ENCODE measurements at regions of chr15 and their contacts with region 1.

Region 1: GRCh38 chr15:95291898-95292472 is 1038.5 kb upstream of the NR2F2 start:
- DNase-seq: peak in 3 of 9 donors; percentile 6 to 15 (median 13)
- ATAC-seq: no peak
- H3K4me3 ChIP-seq: no peak overlapping the region
- H3K4me3 Mint-ChIP-seq: no peak overlapping the region
- H3K27ac ChIP-seq: no peak overlapping the region
- H3K27ac Mint-ChIP-seq: no peak overlapping the region
- H3K4me1 ChIP-seq: no peaks in the 10 kb centered on the region
- H3K4me1 Mint-ChIP-seq: peaks cover 0 to 34% (median 0%) of the 10 kb centered on the region in 7 donors
- H3K27me3 ChIP-seq: no peaks in the 10 kb centered on the region
- H3K27me3 Mint-ChIP-seq: peaks cover 51 to 77% (median 64%) of the 10 kb centered on the region in 5 donors

Region 2: DNA sequence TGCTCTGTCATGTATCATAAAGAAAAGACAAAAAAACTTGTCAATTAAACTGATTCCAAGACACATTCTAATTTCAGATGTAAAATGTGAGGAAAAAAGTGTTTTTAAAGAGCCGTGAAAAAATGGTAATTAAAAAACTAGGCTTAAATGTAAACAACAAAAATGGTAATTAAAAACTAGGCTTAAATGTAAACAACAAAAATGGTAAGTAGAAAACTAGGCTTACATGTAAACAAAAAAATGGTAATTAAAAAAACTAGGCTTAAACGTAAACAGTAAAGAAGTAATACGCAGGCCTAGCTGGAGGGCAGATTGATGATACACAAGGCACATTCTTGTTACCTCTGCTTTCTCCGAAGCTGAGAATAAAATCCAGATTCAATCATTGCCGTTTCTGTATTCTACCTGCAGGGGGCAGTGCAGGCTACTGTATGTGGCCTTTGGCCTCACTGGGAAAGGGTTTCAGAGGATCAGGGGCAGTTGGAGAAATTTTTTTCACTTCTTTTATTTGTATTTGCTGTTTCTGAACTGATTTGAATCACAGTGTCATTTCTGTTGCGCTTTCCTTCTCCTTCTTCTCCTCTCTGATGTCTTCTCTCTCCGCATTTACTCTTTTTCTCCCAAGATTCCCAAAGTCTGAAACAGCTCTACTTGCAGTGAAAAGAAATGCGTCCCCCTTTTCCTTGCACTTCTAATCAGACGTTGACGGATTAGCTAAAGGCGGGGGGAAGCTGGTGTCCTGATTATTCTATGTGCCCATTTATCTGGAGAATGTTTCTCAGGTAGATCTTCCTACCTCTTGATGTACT is 1127.8 kb before region 1 on chr15:
- CTCF ChIA-PET with region 1: no interaction called
- POLR2A ChIA-PET with region 1: no interaction called
- intact Hi-C with region 1: loop called in 1 of 2 experiments (anchors 5 kb)
- DNase-seq: peak in 8 of 9 donors; percentile 18 to 53 (median 35)
- ATAC-seq: peak; percentile 77
- H3K4me3 ChIP-seq: no peak overlapping the region
- H3K4me3 Mint-ChIP-seq: no peak overlapping the region
- H3K27ac ChIP-seq: no peak overlapping the region
- H3K27ac Mint-ChIP-seq: no peak overlapping the region
- H3K4me1 ChIP-seq: no peaks in the 10 kb centered on the region
- H3K4me1 Mint-ChIP-seq: peaks cover 0 to 9% (median 0%) of the 10 kb centered on the region in 7 donors
- H3K27me3 ChIP-seq: no peaks in the 10 kb centered on the region
- H3K27me3 Mint-ChIP-seq: peaks cover 0 to 30% (median 4%) of the 10 kb centered on the region in 5 donors

Region 3: DNA sequence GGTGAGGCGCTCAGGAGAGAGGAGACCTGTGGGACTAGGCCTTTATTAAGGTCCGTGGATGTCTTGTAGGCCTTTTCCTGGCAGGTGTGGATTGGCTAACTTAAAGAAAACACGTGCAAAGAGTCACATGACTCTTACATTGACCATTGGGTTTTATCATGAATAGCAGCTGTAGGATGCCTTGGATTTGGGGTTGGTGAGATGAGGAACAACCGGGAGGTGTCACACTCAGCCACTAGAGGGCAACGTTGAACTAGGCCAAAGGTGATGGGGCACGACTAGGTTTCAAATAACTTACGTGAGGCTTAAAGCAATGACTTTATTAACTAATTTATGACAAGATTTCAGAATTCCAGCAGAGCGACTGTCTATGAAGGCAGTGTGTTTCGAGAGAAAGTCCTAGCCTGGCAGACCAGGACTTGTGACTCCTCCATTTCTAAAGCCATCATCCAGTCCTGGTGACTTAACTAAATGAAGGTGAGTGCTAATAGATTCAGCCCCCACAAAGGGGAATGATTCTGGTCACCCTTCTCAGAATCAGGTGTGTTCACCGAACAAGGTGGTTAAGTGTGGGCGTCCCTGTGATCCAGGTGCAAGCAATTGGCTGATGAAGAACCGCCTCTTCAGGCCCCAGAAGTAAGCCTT is 715.0 kb before region 1 on chr15:
- CTCF ChIA-PET with region 1: no interaction called
- POLR2A ChIA-PET with region 1: no interaction called
- intact Hi-C with region 1: loop called (anchors 1 to 5 kb)
- DNase-seq: peak in 5 of 9 donors; percentile 7 to 43 (median 13)
- ATAC-seq: peak; percentile 59
- H3K4me3 ChIP-seq: no peak overlapping the region
- H3K4me3 Mint-ChIP-seq: no peak overlapping the region
- H3K27ac ChIP-seq: no peak overlapping the region
- H3K27ac Mint-ChIP-seq: no peak overlapping the region
- H3K4me1 ChIP-seq: no peaks in the 10 kb centered on the region
- H3K4me1 Mint-ChIP-seq: peaks cover 8 to 19% (median 10%) of the 10 kb centered on the region in 7 donors
- H3K27me3 ChIP-seq: peaks cover 0 to 6% of the 10 kb centered on the region in 2 donors
- H3K27me3 Mint-ChIP-seq: peaks cover 52 to 72% (median 65%) of the 10 kb centered on the region in 5 donors

Region 4: GRCh38 chr15:94670438-94671034 is 621.4 kb before region 1 on chr15:
- CTCF ChIA-PET with region 1: no interaction called
- POLR2A ChIA-PET with region 1: no interaction called
- intact Hi-C with region 1: loop called in 1 of 2 experiments (anchors 1 kb)
- DNase-seq: peak in 2 of 9 donors; percentile 3 to 5
- ATAC-seq: no peak
- H3K4me3 ChIP-seq: no peak overlapping the region
- H3K4me3 Mint-ChIP-seq: no peak overlapping the region
- H3K27ac ChIP-seq: no peak overlapping the region
- H3K27ac Mint-ChIP-seq: no peak overlapping the region
- H3K4me1 ChIP-seq: no peaks in the 10 kb centered on the region
- H3K4me1 Mint-ChIP-seq: peaks cover 0 to 3% (median 0%) of the 10 kb centered on the region in 7 donors
- H3K27me3 ChIP-seq: no peaks in the 10 kb centered on the region
- H3K27me3 Mint-ChIP-seq: peaks cover 26 to 63% (median 52%) of the 10 kb centered on the region in 5 donors

Region 5: DNA sequence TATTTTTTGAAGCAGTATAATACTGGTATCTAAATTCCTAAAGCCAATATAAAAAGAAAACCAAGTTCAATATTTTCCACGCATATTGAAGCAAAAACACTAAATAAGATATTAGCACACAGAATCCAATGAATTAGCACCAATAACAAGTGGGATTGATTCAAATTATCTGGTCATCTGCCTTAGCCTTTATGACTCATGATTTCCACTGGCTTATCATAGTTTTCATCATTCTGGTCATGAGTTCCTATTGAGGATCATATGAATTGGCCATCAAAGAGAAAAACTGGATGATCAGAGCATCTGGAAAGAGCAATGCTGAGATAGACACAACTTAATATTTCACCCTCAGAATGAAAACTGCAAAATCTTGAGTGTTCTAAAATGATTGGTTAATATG is 250.7 kb before region 1 on chr15:
- CTCF ChIA-PET with region 1: no interaction called
- POLR2A ChIA-PET with region 1: no interaction called
- intact Hi-C with region 1: no loop called
- DNase-seq: no peak
- ATAC-seq: no peak
- H3K4me3 ChIP-seq: no peak overlapping the region
- H3K4me3 Mint-ChIP-seq: no peak overlapping the region
- H3K27ac ChIP-seq: no peak overlapping the region
- H3K27ac Mint-ChIP-seq: no peak overlapping the region
- H3K4me1 ChIP-seq: no peaks in the 10 kb centered on the region
- H3K4me1 Mint-ChIP-seq: no peaks in the 10 kb centered on the region
- H3K27me3 ChIP-seq: no peaks in the 10 kb centered on the region
- H3K27me3 Mint-ChIP-seq: peaks cover 0 to 9% (median 0%) of the 10 kb centered on the region in 5 donors

Region 6: DNA sequence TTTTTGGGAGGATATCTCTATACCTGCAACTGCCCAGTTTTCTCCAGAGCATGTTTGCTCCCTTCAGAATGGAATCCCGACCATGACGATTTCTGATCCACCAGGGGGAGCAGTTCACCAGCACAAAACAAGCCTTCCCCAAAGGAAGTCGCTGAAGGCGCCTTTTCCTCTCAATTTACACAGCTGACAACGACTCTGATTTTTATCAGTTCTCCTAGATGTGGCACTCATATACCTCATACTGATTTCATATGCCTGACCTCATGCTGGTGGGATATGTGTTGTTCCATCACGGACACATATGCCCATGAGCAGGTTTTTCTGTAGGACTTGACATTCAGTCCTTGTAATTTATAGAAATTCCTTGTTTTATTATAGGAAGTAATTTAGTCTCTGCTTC is 32.5 kb before region 1 on chr15:
- CTCF ChIA-PET with region 1: no interaction called
- POLR2A ChIA-PET with region 1: no interaction called
- intact Hi-C with region 1: loop called in 1 of 2 experiments (anchors 1 kb)
- DNase-seq: peak; percentile 7 to 61 (median 43)
- ATAC-seq: peak; percentile 40
- H3K4me3 ChIP-seq: no peak overlapping the region
- H3K4me3 Mint-ChIP-seq: no peak overlapping the region
- H3K27ac ChIP-seq: no peak overlapping the region
- H3K27ac Mint-ChIP-seq: no peak overlapping the region
- H3K4me1 ChIP-seq: no peaks in the 10 kb centered on the region
- H3K4me1 Mint-ChIP-seq: peaks cover 0 to 13% (median 0%) of the 10 kb centered on the region in 7 donors
- H3K27me3 ChIP-seq: peaks cover 0 to 7% of the 10 kb centered on the region in 2 donors
- H3K27me3 Mint-ChIP-seq: peaks cover 41 to 75% (median 44%) of the 10 kb centered on the region in 5 donors

Region 7: DNA sequence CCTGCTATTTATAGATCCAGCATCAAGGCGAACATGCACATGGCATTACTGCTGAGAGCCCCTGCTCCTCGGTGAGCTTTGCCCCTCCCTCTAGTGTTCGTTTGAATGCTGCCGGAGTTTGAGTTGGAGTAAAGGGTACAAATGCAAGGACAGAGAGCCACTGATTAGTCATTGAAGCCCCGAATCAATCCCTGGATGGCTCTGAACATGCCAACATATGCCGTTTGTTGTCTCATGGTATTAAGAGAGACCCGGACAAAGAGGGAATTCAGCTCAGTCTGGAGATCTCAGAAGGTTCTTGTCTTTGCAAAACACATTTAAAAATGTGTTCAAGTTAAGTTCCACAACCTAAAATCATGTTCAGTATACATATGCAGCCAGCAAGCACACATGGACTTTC is 249.3 kb after region 1 on chr15:
- CTCF ChIA-PET with region 1: no interaction called
- POLR2A ChIA-PET with region 1: no interaction called
- intact Hi-C with region 1: no loop called
- DNase-seq: no peak
- ATAC-seq: no peak
- H3K4me3 ChIP-seq: no peak overlapping the region
- H3K4me3 Mint-ChIP-seq: no peak overlapping the region
- H3K27ac ChIP-seq: no peak overlapping the region
- H3K27ac Mint-ChIP-seq: no peak overlapping the region
- H3K4me1 ChIP-seq: no peaks in the 10 kb centered on the region
- H3K4me1 Mint-ChIP-seq: no peaks in the 10 kb centered on the region
- H3K27me3 ChIP-seq: no peaks in the 10 kb centered on the region
- H3K27me3 Mint-ChIP-seq: peaks cover 2 to 11% (median 5%) of the 10 kb centered on the region in 5 donors